ENCODE measurements at regions of chr14 and their contacts with region 1.

Region 1: GRCh38 chr14:28751467-28752058 is 15.0 kb upstream of the FOXG1 start:
- DNase-seq: peak in 1 of 4 donors; percentile 57
- ATAC-seq: peak; percentile 98
- H3K4me3 ChIP-seq: no peak overlapping the region
- H3K27ac ChIP-seq: no peak overlapping the region
- H3K4me1 ChIP-seq: no peaks in the 10 kb centered on the region
- H3K27me3 ChIP-seq: peaks cover 26 to 59% of the 10 kb centered on the region in 2 donors
- CTCF ChIP-seq: peak; percentile 36 to 43

Region 2: GRCh38 chr14:28461372-28461771 is 290.2 kb before region 1 on chr14:
- intact Hi-C with region 1: no loop called
- DNase-seq: no peak
- ATAC-seq: no peak
- H3K4me3 ChIP-seq: no peak overlapping the region
- H3K27ac ChIP-seq: no peak overlapping the region
- H3K4me1 ChIP-seq: no peaks in the 10 kb centered on the region
- H3K27me3 ChIP-seq: no peaks in the 10 kb centered on the region
- CTCF ChIP-seq: no peak

Region 3: DNA sequence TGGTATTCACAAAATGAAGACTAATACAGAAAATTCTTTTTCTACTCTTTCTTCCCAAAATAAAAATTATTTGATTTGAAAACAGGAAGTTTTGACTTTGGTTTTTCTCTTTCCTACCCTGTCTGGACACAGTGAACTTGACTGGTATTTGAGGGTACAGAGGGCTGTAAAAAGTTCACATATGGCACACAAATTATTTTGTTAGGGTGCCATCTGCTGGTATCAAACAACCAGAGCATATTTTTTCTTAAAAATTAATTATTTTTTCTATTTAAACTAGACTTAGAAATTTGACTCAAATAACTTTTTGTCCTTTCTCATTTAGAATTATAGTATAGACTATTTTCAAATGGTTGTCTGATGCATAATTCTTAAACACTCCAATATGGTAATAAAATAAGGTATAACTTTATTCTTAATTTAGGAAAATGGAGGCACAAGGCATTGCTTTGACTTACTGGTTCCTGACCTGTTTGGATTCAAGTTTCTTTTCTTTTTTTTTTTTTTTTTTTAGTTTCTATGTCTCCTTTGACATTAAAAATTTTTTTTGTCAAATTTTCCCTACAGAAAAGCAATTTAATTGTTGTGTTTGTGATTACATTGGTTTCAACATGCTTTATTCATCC is 785.4 kb after region 1 on chr14:
- intact Hi-C with region 1: loop called in 1 of 2 experiments (anchors 10 kb)
- DNase-seq: no peak
- ATAC-seq: no peak
- H3K4me3 ChIP-seq: no peak overlapping the region
- H3K27ac ChIP-seq: no peak overlapping the region
- H3K4me1 ChIP-seq: no peaks in the 10 kb centered on the region
- H3K27me3 ChIP-seq: no peaks in the 10 kb centered on the region
- CTCF ChIP-seq: peak in 1 of 2 donors; percentile 20

Measured in left lung (tissue), 14 donors.